Thyroid gland (tissue), 4 donors: ENCODE measurements at regions of chr3 and their contacts with region 1.

Region 1: GRCh38 chr3:111571907-111572460 is 23.2 kb downstream of the ZBED2 start:
- DNase-seq: no peak
- H3K4me3 ChIP-seq: no peak overlapping the region
- H3K27ac ChIP-seq: no peak overlapping the region
- H3K4me1 ChIP-seq: no peaks in the 10 kb centered on the region
- H3K27me3 ChIP-seq: no peaks in the 10 kb centered on the region
- CTCF ChIP-seq: no peak
- POLR2A ChIP-seq: no peak

Region 2: DNA sequence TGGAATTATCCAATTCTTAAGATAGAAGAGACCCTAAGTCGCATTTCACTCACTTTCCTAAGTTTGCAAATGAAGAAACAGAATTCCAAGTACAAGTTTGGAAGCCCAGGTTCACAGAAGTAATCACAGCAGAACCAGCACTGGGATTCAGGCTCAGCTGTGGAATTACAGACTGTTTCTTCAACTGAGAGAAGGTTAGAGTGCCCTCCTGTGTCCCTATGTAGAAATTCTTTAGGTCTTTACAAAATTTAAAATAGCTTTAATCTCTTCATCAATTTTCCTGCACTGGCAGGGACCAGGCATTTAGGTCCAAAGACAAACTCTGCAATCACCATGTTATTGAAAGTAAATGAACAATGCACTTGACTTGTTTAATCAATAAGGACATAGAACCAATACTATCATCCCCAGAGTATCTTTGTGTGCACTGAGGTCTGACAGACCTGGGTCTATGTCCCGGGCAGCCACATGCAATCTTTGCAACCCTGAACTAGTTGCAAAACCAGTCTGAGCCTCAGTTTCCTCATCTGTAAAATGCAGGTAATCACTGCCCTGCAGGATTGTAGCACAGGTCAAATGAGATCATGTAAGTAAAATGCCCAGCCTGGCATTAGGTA is 119.4 kb after region 1 on chr3:
- intact Hi-C with region 1: loop called (anchors 5 kb)
- DNase-seq: peak in 1 of 2 donors; percentile 26
- H3K4me3 ChIP-seq: no peak overlapping the region
- H3K27ac ChIP-seq: peak overlapping the region in 2 of 3 donors; percentile 19 to 54
- H3K4me1 ChIP-seq: peaks cover 7 to 13% of the 10 kb centered on the region in 2 donors
- H3K27me3 ChIP-seq: no peaks in the 10 kb centered on the region
- CTCF ChIP-seq: peak in 5 of 6 experiments; percentile 24 to 73 (median 57)
- POLR2A ChIP-seq: no peak

Region 3: GRCh38 chr3:111717601-111718000 is 145.6 kb after region 1 on chr3:
- intact Hi-C with region 1: no loop called
- DNase-seq: peak; percentile 79 to 84
- H3K4me3 ChIP-seq: no peak overlapping the region
- H3K27ac ChIP-seq: peak overlapping the region in 1 of 3 donors; percentile 19
- H3K4me1 ChIP-seq: no peaks in the 10 kb centered on the region
- H3K27me3 ChIP-seq: no peaks in the 10 kb centered on the region
- CTCF ChIP-seq: peak; percentile 89 to 97 (median 94)
- POLR2A ChIP-seq: no peak